Common myeloid progenitor, CD34-positive (primary cell): ENCODE measurements at regions of chr12 and their contacts with region 1.

Region 1: GRCh38 chr12:2624543-2625288 is 170.1 kb upstream of the FKBP4 start:
- DNase-seq: peak; percentile 71 to 87 (median 86)
- H3K4me3 ChIP-seq: peak overlapping the region in 2 of 7 experiments; percentile 7 to 11
- H3K27ac ChIP-seq: peak overlapping the region in 1 of 2 experiments; percentile 46
- H3K4me1 ChIP-seq: peaks cover 5 to 84% (median 72%) of the 10 kb centered on the region in 4 experiments
- H3K27me3 ChIP-seq: no peaks in the 10 kb centered on the region

Region 2: DNA sequence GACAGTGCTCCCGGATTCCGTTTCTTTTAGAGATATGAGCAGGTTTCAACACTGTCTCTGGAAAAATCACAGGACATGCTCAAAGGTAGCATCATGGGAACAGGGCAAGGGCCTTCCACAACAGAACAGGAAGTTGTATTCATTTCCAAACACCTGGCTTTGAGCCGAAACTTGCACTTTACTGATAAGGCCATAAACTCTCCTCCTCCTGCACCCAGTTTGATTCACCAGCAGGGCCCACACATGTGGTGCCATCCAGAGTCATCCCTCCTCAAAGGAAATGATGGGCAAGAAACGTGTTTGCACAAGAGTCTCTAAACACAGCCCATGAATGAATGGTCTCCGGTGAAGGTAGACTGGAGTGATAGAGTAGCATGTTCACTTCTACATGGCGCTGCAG is 98.3 kb before region 1 on chr12:
- CTCF ChIA-PET with region 1: no interaction called
- POLR2A ChIA-PET with region 1: no interaction called
- DNase-seq: peak in 1 of 3 donors; percentile 23
- H3K4me3 ChIP-seq: no peak overlapping the region
- H3K27ac ChIP-seq: no peak overlapping the region
- H3K4me1 ChIP-seq: peaks cover 12 to 38% (median 23%) of the 10 kb centered on the region in 4 experiments
- H3K27me3 ChIP-seq: no peaks in the 10 kb centered on the region

Region 3: DNA sequence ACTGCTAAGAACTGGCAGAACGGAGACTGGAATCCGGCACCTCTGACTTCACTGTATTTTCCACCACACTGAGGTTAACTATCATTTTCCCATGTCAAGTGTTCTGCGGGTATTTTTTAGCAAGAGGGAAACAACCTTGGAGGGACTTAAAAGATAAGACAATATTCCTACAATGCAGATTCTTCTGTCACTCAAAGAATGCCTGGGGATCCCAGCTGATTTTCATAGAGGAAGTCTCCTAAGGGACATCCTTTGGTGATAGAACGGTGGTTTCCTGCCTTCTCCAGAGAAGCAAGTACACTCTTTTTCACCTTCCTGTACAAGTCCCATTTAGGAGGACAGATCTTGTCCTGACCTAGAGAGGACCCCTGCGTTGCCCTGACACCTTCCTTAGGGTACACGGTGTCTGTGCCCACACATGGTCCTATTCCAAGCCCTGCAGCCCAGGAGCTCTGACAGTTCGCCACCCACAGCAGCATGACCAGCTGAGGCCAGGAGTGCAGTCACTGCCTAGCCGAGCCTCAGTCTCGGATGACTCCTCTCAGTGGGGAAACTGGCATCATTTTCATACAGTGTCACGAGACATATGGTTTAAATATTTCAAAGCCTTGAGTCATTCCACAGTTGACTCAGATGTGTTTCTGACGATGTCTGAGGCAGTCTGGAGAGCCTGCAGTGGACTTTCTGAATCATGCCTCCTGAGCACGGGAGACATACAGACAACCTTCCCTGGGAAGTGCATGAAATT is 11.2 kb before region 1 on chr12:
- CTCF ChIA-PET with region 1: interaction called, 44 read pairs
- POLR2A ChIA-PET with region 1: interaction called, 9 read pairs
- DNase-seq: peak in 2 of 3 donors; percentile 71 to 78
- H3K4me3 ChIP-seq: no peak overlapping the region
- H3K27ac ChIP-seq: no peak overlapping the region
- H3K4me1 ChIP-seq: peaks cover 2 to 62% (median 56%) of the 10 kb centered on the region in 4 experiments
- H3K27me3 ChIP-seq: no peaks in the 10 kb centered on the region

Region 4: DNA sequence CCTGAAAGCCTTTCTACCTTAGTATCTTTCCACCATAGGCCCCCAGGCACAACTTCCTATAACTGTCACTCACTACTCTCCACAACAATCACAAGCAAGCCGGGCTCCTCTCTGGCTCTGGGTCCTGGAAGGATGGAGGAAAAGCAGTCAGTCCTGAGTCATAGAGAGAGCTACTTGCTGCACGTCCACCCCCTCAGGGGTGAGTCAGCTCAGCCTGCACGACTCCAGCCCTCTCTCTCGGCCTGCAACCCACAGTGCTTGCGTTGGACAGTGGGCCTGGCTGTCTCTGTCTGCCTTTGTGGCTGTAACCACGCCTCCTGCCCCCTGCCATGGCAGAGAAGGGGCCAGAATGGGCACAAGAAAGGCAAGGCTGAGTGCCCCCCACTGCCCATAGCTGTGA is 16.0 kb after region 1 on chr12:
- CTCF ChIA-PET with region 1: interaction called, 192 read pairs
- POLR2A ChIA-PET with region 1: interaction called, 7 read pairs
- DNase-seq: peak; percentile 64 to 90 (median 83)
- H3K4me3 ChIP-seq: peak overlapping the region in 1 of 7 experiments; percentile 4
- H3K27ac ChIP-seq: peak overlapping the region in 1 of 2 experiments; percentile 51
- H3K4me1 ChIP-seq: peaks cover 18 to 92% (median 71%) of the 10 kb centered on the region in 4 experiments
- H3K27me3 ChIP-seq: no peaks in the 10 kb centered on the region

Region 5: GRCh38 chr12:2682296-2683251 is 57.9 kb after region 1 on chr12:
- CTCF ChIA-PET with region 1: interaction called, 42 read pairs
- POLR2A ChIA-PET with region 1: no interaction called
- DNase-seq: peak; percentile 80 to 94 (median 91)
- H3K4me3 ChIP-seq: no peak overlapping the region
- H3K27ac ChIP-seq: no peak overlapping the region
- H3K4me1 ChIP-seq: peaks cover 3 to 20% (median 16%) of the 10 kb centered on the region in 4 experiments
- H3K27me3 ChIP-seq: no peaks in the 10 kb centered on the region